ENCODE measurements at regions of chr20 and their contacts with region 1.

Region 1: GRCh38 chr20:15399781-15400180 is 1062.4 kb upstream of the FLRT3 start:
- DNase-seq: no peak

Region 2: GRCh38 chr20:15415908-15416307 is 16.1 kb after region 1 on chr20:
- intact Hi-C with region 1: no loop called
- DNase-seq: no peak

Region 3: GRCh38 chr20:15498926-15499325 is 99.1 kb after region 1 on chr20:
- intact Hi-C with region 1: no loop called
- DNase-seq: no peak

Region 4: DNA sequence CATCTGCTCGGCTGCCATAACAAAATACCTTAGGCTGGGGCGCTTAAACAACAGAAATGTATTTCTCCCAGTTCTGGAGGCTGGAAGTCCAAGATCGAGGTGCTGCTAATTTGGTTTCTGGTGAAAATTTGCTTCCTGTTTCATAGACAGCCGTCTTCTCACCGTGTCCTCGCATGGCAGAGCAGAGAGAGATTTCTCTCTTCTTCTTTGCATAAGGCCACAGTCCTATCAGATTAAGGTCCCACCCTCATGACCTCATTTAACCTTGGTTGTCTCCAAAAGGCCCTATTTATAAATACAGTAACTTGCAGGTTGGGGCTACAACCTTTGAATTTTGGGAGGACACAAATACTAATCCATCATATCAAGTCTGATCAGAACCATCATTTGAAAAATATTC is 629.1 kb after region 1 on chr20:
- intact Hi-C with region 1: loop called in 1 of 2 experiments (anchors 5 kb)
- DNase-seq: no peak

Measured in posterior vena cava (tissue), 2 donors.